PC-9 (cell line): ENCODE measurements at regions of chr2 and their contacts with region 1.

Region 1: DNA sequence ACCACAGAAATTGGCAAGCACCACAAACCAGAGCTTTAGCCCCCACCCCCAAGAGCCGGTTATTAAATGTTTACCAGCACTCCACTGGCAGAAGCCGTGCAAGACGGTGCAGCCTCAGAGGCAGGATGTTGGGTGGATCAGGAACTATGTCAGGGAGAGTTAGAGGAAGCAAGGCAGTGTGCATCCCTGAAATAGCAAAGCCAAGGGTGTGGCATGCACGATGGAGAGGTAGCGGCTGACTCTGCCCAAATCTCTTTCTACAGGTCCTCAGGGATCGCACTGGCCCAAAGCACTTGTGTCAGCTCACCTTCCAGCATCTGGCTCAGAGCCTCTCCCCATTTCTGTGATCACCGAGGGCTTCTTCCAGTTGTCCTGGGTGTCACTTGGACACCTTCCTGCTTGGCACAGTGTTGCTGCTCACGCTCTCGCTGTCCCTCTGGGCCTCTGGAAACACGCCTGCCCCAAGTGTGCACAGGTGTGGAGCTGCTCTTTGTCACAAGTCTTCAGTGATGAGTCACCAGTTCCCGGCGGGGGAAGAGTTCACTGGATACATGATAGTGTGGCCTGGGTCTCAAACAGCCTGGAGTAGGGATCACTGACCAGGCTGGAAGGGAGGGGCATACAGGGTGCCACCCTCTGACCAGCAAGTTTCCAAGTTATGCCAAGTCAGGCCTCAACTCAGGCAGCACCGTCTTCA is 17.3 kb upstream of the B3GNT7 start:
- DNase-seq: peak; percentile 72 to 84
- H3K4me3 ChIP-seq: no peak overlapping the region
- H3K27ac ChIP-seq: peak overlapping the region; percentile 68
- H3K4me1 ChIP-seq: peaks cover 53% of the 10 kb centered on the region
- H3K27me3 ChIP-seq: no peaks in the 10 kb centered on the region
- CTCF ChIP-seq: no peak

Region 2: GRCh38 chr2:230885463-230886130 is 492.6 kb before region 1 on chr2:
- CTCF ChIA-PET with region 1: interaction called, 19 read pairs
- POLR2A ChIA-PET with region 1: no interaction called
- intact Hi-C with region 1: no loop called
- DNase-seq: no peak
- H3K4me3 ChIP-seq: no peak overlapping the region
- H3K27ac ChIP-seq: no peak overlapping the region
- H3K4me1 ChIP-seq: no peaks in the 10 kb centered on the region
- H3K27me3 ChIP-seq: no peaks in the 10 kb centered on the region
- CTCF ChIP-seq: no peak

Region 3: DNA sequence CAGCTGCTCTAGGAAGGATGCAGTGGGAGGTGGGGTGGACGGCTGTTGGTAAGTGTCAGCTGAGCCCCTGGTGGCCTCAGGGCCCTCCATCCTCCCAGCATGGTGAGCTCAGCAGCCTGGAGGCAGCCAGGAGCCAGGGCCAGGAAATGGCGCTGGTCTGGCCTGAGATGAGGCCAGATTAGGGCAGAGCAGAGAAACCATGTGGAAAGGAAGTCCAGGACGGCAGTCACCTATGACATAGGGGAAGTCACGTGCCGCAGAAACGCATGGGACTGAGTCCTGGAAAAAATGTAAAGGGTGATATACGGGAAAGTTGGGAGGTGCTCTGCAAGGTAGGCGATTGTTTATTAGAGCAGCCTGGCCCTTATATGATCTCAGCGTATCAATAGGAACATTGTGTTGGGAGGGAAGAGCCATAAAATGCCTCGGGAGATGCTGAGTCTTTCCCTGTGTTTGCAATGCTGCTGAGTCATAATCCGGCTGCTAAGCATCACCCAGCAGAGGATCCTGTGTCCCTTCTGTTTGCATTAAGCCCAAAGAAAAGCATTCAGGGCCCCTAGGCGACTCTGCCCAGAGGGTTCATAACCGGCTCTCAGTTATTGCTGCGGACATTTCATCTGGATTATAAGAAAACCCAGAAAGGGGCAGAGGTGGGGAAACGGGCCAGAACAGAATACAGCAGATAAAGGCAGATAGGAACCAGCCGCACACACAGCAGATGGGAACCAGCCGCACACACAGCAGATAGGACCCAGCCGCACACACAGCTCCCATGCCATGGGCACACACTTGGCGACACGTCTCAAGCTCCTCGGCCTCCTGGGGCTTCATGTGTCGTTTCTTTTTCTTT is 13.0 kb before region 1 on chr2:
- CTCF ChIA-PET with region 1: no interaction called
- POLR2A ChIA-PET with region 1: no interaction called
- intact Hi-C with region 1: loop called (anchors 1 kb)
- DNase-seq: peak; percentile 74 to 95
- H3K4me3 ChIP-seq: peak overlapping the region; percentile 29; the same call in 1 of the 2 replicates
- H3K27ac ChIP-seq: peak overlapping the region; percentile 92
- H3K4me1 ChIP-seq: peaks cover 53% of the 10 kb centered on the region
- H3K27me3 ChIP-seq: no peaks in the 10 kb centered on the region
- CTCF ChIP-seq: no peak

Region 4: GRCh38 chr2:231557571-231558237 is 179.5 kb after region 1 on chr2:
- CTCF ChIA-PET with region 1: no interaction called
- POLR2A ChIA-PET with region 1: no interaction called
- intact Hi-C with region 1: no loop called
- DNase-seq: peak; percentile 42 to 54
- H3K4me3 ChIP-seq: no peak overlapping the region
- H3K27ac ChIP-seq: no peak overlapping the region
- H3K4me1 ChIP-seq: no peaks in the 10 kb centered on the region
- H3K27me3 ChIP-seq: peaks cover 4% of the 10 kb centered on the region; the same call in 1 of the 2 replicates
- CTCF ChIP-seq: peak; percentile 82

Region 5: GRCh38 chr2:231662028-231662810 is 284.0 kb after region 1 on chr2:
- CTCF ChIA-PET with region 1: no interaction called
- POLR2A ChIA-PET with region 1: no interaction called
- intact Hi-C with region 1: no loop called
- DNase-seq: peak; percentile 88 to 98
- H3K4me3 ChIP-seq: peak overlapping the region; percentile 56
- H3K27ac ChIP-seq: peak overlapping the region; percentile 64
- H3K4me1 ChIP-seq: peaks cover 39% of the 10 kb centered on the region
- H3K27me3 ChIP-seq: no peaks in the 10 kb centered on the region
- CTCF ChIP-seq: no peak